T-cell (primary cell): ENCODE measurements at regions of chr12 and their contacts with region 1.

Region 1: DNA sequence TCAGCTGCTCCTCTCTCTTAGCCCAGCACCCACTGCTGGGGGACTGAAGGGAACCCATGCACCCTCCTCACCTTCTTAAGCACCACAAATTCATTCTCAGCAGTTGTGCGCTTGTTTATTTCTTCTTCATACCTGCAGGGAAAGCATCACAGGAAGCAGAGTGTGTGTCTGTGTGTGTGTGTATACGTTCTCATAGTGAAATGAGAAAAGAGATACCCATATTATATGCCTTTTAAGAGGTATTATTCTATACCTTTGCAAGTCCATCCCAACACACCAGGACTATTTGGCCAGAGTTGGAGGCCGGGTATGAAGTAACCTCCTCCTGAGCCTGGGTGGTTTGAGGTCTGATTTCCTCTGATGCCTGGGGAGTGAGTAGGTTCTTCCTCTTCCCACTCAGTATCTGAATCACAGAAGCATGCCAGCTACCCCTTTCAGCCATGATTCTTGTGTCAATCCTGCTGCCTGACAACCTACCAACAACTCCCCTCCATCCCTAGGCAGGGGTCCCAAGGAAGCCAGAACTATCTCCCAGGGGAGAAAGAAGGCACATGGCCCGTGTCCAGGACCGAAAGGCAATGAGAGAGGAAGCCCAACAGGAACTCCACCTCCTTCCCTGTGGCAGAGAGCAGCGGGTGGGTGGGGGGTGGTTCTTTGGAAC is 3.0 kb downstream of the KRT73 start:
- DNase-seq: peak in 10 of 35 experiments; percentile 10 to 58 (median 30)
- ATAC-seq: peak; percentile 29 to 42 (median 38)
- H3K4me3 ChIP-seq: peak overlapping the region in 1 of 2 donors; percentile 2
- H3K4me3 Mint-ChIP-seq: peak overlapping the region; percentile 1 to 67 (median 62)
- H3K27ac ChIP-seq: peak overlapping the region; percentile 70
- H3K27ac Mint-ChIP-seq: peak overlapping the region; percentile 89 to 99
- H3K4me1 ChIP-seq: peaks cover 70 to 85% of the 10 kb centered on the region in 2 experiments
- H3K4me1 Mint-ChIP-seq: peaks cover 78 to 95% (median 82%) of the 10 kb centered on the region in 3 donors
- H3K27me3 ChIP-seq: no peaks in the 10 kb centered on the region
- H3K27me3 Mint-ChIP-seq: peaks cover 0 to 4% of the 10 kb centered on the region in 2 donors

Region 2: DNA sequence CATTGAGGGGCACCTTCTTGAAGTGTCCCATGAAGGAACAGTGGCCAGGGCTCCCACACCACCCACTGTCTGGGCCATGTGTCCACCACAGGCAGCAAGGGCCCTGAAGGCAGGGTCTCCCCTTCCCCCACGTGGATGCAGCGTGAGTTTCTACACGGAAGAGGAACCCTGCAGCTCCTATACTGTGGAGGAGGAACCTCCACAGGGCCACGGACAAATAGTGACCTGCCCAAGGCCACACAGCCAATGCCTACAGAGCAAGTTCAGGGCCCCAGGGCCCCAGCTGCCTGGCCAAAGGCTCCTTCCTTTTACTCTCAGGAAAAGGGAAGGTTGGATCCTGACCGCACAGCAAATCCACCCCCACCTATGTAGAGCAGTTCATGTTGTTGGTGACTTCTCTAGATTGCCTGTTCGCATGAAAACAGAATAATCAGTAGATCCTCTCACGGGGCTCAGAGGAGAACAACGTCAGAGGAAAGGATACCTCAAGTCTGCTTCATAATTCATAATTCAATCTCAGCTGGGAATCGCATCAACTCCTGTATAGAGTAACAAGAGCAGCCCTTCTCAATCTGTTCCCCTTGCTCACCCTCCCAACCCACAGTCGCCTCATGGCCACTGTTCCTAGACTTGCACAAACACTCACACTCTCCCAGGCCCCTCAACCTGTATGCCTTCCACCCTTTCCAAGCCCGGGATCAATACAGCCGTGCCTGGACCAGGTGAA is 14.1 kb after region 1 on chr12:
- CTCF ChIA-PET with region 1: no interaction called
- POLR2A ChIA-PET with region 1: interaction called in 1 of 2 experiments, 12 read pairs
- DNase-seq: peak in 1 of 35 experiments; percentile 4
- ATAC-seq: no peak
- H3K4me3 ChIP-seq: peak overlapping the region in 1 of 2 donors; percentile 39
- H3K4me3 Mint-ChIP-seq: peak overlapping the region; percentile 48 to 78 (median 62)
- H3K27ac ChIP-seq: no peak overlapping the region
- H3K27ac Mint-ChIP-seq: peak overlapping the region; percentile 81 to 92
- H3K4me1 ChIP-seq: peaks cover 42 to 48% of the 10 kb centered on the region in 2 experiments
- H3K4me1 Mint-ChIP-seq: peaks cover 75 to 87% (median 76%) of the 10 kb centered on the region in 3 donors
- H3K27me3 ChIP-seq: no peaks in the 10 kb centered on the region
- H3K27me3 Mint-ChIP-seq: peaks cover 0 to 3% of the 10 kb centered on the region in 2 donors

Region 3: GRCh38 chr12:53014709-53015108 is 399.4 kb after region 1 on chr12:
- CTCF ChIA-PET with region 1: no interaction called
- POLR2A ChIA-PET with region 1: no interaction called
- DNase-seq: no peak
- ATAC-seq: no peak
- H3K4me3 ChIP-seq: no peak overlapping the region
- H3K4me3 Mint-ChIP-seq: no peak overlapping the region
- H3K27ac ChIP-seq: no peak overlapping the region
- H3K27ac Mint-ChIP-seq: peak overlapping the region in 1 of 2 donors; percentile 28
- H3K4me1 ChIP-seq: peaks cover 6 to 24% of the 10 kb centered on the region in 2 experiments
- H3K4me1 Mint-ChIP-seq: peaks cover 43 to 52% (median 50%) of the 10 kb centered on the region in 3 donors
- H3K27me3 ChIP-seq: no peaks in the 10 kb centered on the region
- H3K27me3 Mint-ChIP-seq: no peaks in the 10 kb centered on the region